ENCODE measurements at regions of chr9 and their contacts with region 1.

Region 1: DNA sequence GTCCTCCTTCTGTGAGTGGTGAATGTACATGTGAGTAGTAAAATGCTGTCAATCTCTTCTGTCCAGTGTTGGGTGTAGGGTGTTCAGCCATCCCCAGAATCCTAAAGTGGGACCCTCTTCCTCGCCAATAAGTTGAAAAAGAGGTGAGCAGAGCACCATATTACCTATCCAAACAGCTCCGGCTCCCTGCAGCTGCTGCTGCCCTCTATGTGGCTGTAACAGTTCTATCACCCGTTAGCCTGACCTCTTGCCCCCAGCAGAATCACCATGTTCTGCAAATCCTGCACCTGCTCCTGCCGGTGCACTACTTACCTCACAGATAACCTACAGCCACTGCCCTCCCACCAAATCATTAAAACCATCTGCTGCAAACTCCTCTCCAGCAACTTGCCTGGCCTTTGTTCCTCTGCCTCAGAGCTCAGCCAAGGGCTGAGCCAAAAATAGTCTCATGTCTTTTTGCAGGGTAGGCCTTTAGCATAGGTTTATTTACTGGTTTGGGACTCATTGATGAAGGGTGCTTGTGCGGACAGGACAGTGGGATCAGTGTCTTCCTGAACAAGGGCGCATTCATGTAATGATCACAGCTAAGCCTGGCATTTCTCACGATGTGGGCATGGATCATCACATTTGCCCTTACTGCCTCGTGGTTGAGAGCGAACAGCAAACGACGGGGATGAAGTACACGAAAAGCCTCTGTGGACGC is 49.6 kb upstream of the CCL21 start:
- DNase-seq: no peak
- H3K4me3 ChIP-seq: no peak overlapping the region
- H3K4me3 Mint-ChIP-seq: no peak overlapping the region
- H3K27ac Mint-ChIP-seq: no peak overlapping the region
- H3K4me1 ChIP-seq: no peaks in the 10 kb centered on the region
- H3K4me1 Mint-ChIP-seq: no peaks in the 10 kb centered on the region
- H3K27me3 ChIP-seq: no peaks in the 10 kb centered on the region
- H3K27me3 Mint-ChIP-seq: peaks cover 12% of the 10 kb centered on the region
- CTCF ChIP-seq: no peak

Region 2: DNA sequence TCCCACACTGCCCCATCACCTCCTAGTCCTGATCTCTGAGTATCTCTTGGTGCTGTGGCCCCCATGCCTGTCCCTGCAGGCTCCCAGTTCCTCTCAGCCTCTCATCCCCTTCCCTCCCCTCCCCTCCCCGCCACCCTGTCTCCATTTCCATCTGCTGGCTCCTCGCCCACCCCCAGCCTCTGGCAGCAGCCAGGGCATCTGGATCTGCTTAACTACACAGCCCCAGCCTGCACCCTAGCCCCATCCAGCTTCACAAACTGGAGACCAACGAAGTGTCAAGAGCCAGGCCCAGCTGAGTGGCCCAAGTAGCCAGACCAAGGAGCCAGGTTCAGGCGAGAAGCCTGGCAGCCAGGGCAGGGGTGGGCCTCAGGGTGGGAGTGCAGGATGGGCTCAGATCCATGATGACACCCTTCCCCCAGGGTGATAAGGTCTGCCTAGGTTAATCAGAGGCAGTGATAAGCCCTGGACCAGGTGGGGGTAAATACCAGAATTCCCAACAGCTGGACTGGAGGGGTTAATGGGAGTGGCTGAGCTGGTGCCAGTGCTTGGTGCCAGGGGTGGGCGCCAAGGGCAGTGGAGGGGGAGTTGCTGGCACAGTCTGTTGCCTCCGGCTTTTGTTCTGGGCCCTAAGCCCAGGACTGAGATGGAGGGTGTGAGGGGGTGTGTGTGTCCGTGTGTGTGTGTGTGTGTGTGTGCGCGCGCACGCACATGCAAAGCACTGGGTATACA is 105.1 kb before region 1 on chr9:
- CTCF ChIA-PET with region 1: no interaction called
- POLR2A ChIA-PET with region 1: no interaction called
- intact Hi-C with region 1: no loop called
- DNase-seq: no peak
- H3K4me3 ChIP-seq: no peak overlapping the region
- H3K4me3 Mint-ChIP-seq: no peak overlapping the region
- H3K27ac Mint-ChIP-seq: no peak overlapping the region
- H3K4me1 ChIP-seq: peaks cover 23% of the 10 kb centered on the region
- H3K4me1 Mint-ChIP-seq: peaks cover 20% of the 10 kb centered on the region
- H3K27me3 ChIP-seq: no peaks in the 10 kb centered on the region
- H3K27me3 Mint-ChIP-seq: no peaks in the 10 kb centered on the region
- CTCF ChIP-seq: no peak

Region 3: DNA sequence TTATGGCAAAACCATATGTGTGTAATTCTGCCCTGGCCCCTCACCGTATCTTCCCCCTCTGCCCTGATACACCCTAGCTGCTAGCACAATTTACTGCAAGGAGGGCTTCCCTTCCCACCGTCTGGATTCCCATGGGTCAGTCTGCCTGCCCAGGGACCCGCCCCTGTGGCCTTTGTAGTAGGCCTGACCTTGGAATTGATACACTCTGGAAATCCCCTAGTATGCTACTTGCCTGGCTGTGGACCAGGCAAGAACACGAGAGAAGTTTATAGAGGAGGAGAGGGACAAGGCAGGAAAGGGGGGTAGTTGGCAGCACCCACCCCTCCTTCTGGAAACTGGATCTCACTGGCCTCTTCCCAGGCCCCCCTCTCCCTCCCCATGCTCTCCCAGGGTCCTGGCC is 66.2 kb after region 1 on chr9:
- CTCF ChIA-PET with region 1: no interaction called
- POLR2A ChIA-PET with region 1: no interaction called
- intact Hi-C with region 1: no loop called
- DNase-seq: no peak
- H3K4me3 ChIP-seq: no peak overlapping the region
- H3K4me3 Mint-ChIP-seq: no peak overlapping the region
- H3K27ac Mint-ChIP-seq: no peak overlapping the region
- H3K4me1 ChIP-seq: no peaks in the 10 kb centered on the region
- H3K4me1 Mint-ChIP-seq: no peaks in the 10 kb centered on the region
- H3K27me3 ChIP-seq: no peaks in the 10 kb centered on the region; the same call in none of the 2 replicates
- H3K27me3 Mint-ChIP-seq: peaks cover 5% of the 10 kb centered on the region
- CTCF ChIP-seq: no peak

Region 4: DNA sequence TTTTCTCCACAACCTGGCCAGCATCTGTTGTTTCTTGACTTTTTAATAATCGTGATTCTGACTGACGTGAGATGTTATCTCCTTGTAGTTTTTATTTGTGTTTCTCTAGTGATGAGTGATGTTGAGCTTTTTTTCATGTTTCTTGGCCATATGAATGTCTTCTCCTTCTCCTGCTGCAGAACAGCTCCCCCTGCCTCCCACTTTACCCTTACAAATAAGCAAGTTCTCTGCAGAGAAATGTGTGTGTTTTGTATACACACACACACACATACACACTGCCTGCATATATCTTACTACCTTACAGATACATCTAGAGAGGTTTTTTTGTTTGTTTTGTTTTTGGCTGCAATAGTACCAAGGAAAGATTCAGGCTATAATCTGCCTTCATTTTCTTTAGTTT is 109.8 kb after region 1 on chr9:
- CTCF ChIA-PET with region 1: interaction called, 12 read pairs
- POLR2A ChIA-PET with region 1: no interaction called
- intact Hi-C with region 1: loop called (anchors 1 kb)
- DNase-seq: peak in 1 of 2 experiments; percentile 41
- H3K4me3 ChIP-seq: no peak overlapping the region
- H3K4me3 Mint-ChIP-seq: no peak overlapping the region
- H3K27ac Mint-ChIP-seq: no peak overlapping the region
- H3K4me1 ChIP-seq: no peaks in the 10 kb centered on the region
- H3K4me1 Mint-ChIP-seq: no peaks in the 10 kb centered on the region
- H3K27me3 ChIP-seq: no peaks in the 10 kb centered on the region
- H3K27me3 Mint-ChIP-seq: peaks cover 9% of the 10 kb centered on the region
- CTCF ChIP-seq: peak; percentile 43 to 64

Region 5: GRCh38 chr9:34989003-34989945 is 229.7 kb after region 1 on chr9 and contains the start of gene DNAJB5:
- CTCF ChIA-PET with region 1: interaction called, 6 read pairs
- POLR2A ChIA-PET with region 1: no interaction called
- intact Hi-C with region 1: loop called (anchors 5 kb)
- DNase-seq: peak; percentile 98 to 99
- H3K4me3 ChIP-seq: peak within 1 kb of the TSS; percentile 85
- H3K4me3 Mint-ChIP-seq: peak within 1 kb of the TSS; percentile 95
- H3K27ac Mint-ChIP-seq: peak within 1 kb of the TSS; percentile 91
- H3K4me1 ChIP-seq: peaks cover 8% of the 10 kb centered on the region
- H3K4me1 Mint-ChIP-seq: peaks cover 9% of the 10 kb centered on the region
- H3K27me3 ChIP-seq: no peaks in the 10 kb centered on the region; the same call in 1 of the 2 replicates
- H3K27me3 Mint-ChIP-seq: peaks cover 2% of the 10 kb centered on the region
- CTCF ChIP-seq: no peak
- total RNA-seq, gene DNAJB5: 3.1 and 3.4 TPM in 2 replicates

Measured in Caco-2 (cell line).